PC-9 (cell line): ENCODE measurements at regions of chr15 and their contacts with region 1.

Region 1: GRCh38 chr15:99282121-99282520 is 30.8 kb downstream of the LRRC28 start:
- DNase-seq: no peak
- H3K4me3 ChIP-seq: no peak overlapping the region
- H3K27ac ChIP-seq: no peak overlapping the region
- H3K4me1 ChIP-seq: no peaks in the 10 kb centered on the region
- H3K27me3 ChIP-seq: no peaks in the 10 kb centered on the region
- CTCF ChIP-seq: no peak

Region 2: GRCh38 chr15:99409097-99409473 is 127.0 kb after region 1 on chr15:
- CTCF ChIA-PET with region 1: no interaction called
- POLR2A ChIA-PET with region 1: no interaction called
- intact Hi-C with region 1: loop called (anchors 1 kb)
- DNase-seq: peak; percentile 38 to 60
- H3K4me3 ChIP-seq: no peak overlapping the region
- H3K27ac ChIP-seq: no peak overlapping the region
- H3K4me1 ChIP-seq: no peaks in the 10 kb centered on the region
- H3K27me3 ChIP-seq: no peaks in the 10 kb centered on the region
- CTCF ChIP-seq: peak; percentile 70

Region 3: GRCh38 chr15:99704444-99704838 is 422.3 kb after region 1 on chr15:
- CTCF ChIA-PET with region 1: interaction called, 5 read pairs
- POLR2A ChIA-PET with region 1: no interaction called
- intact Hi-C with region 1: loop called (anchors 1 kb)
- DNase-seq: peak; percentile 35 to 71
- H3K4me3 ChIP-seq: no peak overlapping the region
- H3K27ac ChIP-seq: peak overlapping the region; percentile 66; the same call in 1 of the 2 replicates
- H3K4me1 ChIP-seq: peaks cover 11% of the 10 kb centered on the region
- H3K27me3 ChIP-seq: no peaks in the 10 kb centered on the region
- CTCF ChIP-seq: peak; percentile 79

Region 4: GRCh38 chr15:99755692-99756409 is 473.7 kb after region 1 on chr15:
- CTCF ChIA-PET with region 1: interaction called, 8 read pairs
- POLR2A ChIA-PET with region 1: no interaction called
- intact Hi-C with region 1: loop called (anchors 1 kb)
- DNase-seq: peak; percentile 24 to 38
- H3K4me3 ChIP-seq: no peak overlapping the region
- H3K27ac ChIP-seq: no peak overlapping the region
- H3K4me1 ChIP-seq: no peaks in the 10 kb centered on the region
- H3K27me3 ChIP-seq: no peaks in the 10 kb centered on the region
- CTCF ChIP-seq: peak; percentile 78